Aorta (tissue), 5 donors: ENCODE measurements at regions of chr19 and their contacts with region 1.

Region 1: DNA sequence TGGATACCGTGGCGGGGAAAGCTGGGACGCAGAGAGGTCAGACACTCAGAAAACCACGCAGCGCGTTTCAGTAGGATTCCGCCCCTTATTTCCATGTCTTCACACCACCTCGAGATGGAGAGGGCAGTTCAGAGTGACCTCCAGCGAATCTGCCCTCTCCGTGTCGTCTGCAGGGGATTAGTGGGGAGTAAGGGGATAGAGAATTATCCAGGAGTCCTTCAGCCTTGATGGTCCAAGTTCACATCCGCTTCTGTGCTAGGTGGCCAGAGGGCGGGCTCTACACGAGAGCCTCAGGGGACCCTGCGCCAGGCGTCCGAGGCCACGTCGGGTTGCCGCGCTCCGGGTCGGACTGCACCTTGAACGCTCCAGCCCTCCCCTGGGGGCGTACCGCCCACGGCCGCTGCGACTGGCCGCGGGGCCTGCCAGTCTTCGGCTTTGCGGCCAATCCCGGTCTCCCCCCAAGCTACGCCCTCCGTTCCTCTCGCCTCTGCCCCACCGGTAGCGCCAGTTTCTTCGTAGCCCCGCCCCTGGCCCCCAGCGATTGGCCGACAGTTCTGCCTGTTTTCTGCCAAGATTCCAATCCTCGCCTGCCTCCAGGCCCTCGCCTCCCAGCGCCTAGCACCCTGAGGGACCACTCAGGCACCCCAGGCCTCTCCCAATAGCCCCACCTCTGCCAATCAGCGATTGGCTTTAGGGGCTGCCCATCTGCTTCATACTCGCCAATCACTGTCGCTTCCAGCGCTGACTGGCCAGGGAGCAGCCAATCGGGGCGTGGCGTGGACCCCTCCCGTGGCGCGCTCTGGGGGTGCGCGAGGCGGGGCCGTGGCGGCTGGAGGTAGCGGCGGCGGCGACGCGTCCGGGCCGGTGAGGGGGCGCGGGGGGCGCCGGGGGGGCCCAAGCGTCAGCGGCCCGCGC is at the start of gene SLC25A42:
- DNase-seq: peak; percentile 99 to 100
- ATAC-seq: peak; percentile 98
- H3K4me3 ChIP-seq: peak within 1 kb of the TSS; percentile 55 to 81
- H3K27ac ChIP-seq: peak within 1 kb of the TSS in 1 of 2 donors; percentile 33
- H3K4me1 ChIP-seq: no peaks in the 10 kb centered on the region
- H3K27me3 ChIP-seq: no peaks in the 10 kb centered on the region
- total RNA-seq, gene SLC25A42: 9.4 to 10.3 TPM

Region 2: DNA sequence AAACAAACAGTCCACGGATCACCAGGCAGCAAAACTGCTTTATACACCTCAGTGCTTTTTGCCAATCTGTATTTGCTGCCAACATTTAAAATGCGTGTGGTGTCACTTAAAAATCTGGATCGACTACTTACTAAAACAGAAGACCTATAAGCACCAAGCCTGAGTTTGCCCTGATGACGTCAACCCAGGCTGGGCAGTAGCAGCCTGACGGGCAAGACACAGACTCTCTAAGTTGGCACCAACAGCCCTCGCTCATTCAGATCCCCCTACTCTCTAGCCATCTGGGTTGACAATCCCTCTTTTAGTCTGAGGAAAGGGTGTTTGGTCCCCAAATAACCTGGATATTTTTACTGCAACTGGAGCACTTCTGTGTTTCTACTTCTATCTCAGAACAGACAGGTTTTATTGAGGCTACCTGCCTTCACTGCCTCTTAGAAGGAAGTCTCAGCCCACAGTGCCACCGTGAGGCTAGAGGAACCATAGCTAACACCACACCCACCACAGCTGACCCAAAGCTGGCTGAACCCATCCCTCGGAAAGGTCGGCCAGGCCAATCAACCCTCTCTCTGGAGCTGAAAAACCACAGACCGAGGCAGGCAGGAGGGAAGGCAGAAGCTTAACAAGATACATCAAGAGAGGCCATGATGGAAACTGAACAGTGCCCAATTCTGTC is 37.0 kb before region 1 on chr19:
- intact Hi-C with region 1: no loop called
- DNase-seq: no peak
- ATAC-seq: peak; percentile 52
- H3K4me3 ChIP-seq: no peak overlapping the region
- H3K27ac ChIP-seq: no peak overlapping the region
- H3K4me1 ChIP-seq: no peaks in the 10 kb centered on the region
- H3K27me3 ChIP-seq: no peaks in the 10 kb centered on the region

Region 3: GRCh38 chr19:19179548-19180441 is 116.4 kb after region 1 on chr19:
- intact Hi-C with region 1: loop called in 1 of 2 experiments (anchors 5 kb)
- DNase-seq: no peak
- ATAC-seq: no peak
- H3K4me3 ChIP-seq: no peak overlapping the region
- H3K27ac ChIP-seq: no peak overlapping the region
- H3K4me1 ChIP-seq: no peaks in the 10 kb centered on the region
- H3K27me3 ChIP-seq: no peaks in the 10 kb centered on the region

Region 4: GRCh38 chr19:19192078-19192882 is 128.8 kb after region 1 on chr19 and contains the starts of genes BORCS8 and RFXANK:
- intact Hi-C with region 1: loop called in 1 of 2 experiments (anchors 5 kb)
- DNase-seq: peak; percentile 99 to 100
- ATAC-seq: peak; percentile 97
- H3K4me3 ChIP-seq: peak within 1 kb of the TSS; percentile 71 to 93
- H3K27ac ChIP-seq: peak within 1 kb of the TSS; percentile 58 to 81
- H3K4me1 ChIP-seq: no peaks in the 10 kb centered on the region
- H3K27me3 ChIP-seq: no peaks in the 10 kb centered on the region
- total RNA-seq, gene BORCS8: 27.1 to 28.2 TPM
- total RNA-seq, gene RFXANK: 33.1 to 44.0 TPM